ENCODE measurements at regions of chr7 and their contacts with region 1.

Region 1: DNA sequence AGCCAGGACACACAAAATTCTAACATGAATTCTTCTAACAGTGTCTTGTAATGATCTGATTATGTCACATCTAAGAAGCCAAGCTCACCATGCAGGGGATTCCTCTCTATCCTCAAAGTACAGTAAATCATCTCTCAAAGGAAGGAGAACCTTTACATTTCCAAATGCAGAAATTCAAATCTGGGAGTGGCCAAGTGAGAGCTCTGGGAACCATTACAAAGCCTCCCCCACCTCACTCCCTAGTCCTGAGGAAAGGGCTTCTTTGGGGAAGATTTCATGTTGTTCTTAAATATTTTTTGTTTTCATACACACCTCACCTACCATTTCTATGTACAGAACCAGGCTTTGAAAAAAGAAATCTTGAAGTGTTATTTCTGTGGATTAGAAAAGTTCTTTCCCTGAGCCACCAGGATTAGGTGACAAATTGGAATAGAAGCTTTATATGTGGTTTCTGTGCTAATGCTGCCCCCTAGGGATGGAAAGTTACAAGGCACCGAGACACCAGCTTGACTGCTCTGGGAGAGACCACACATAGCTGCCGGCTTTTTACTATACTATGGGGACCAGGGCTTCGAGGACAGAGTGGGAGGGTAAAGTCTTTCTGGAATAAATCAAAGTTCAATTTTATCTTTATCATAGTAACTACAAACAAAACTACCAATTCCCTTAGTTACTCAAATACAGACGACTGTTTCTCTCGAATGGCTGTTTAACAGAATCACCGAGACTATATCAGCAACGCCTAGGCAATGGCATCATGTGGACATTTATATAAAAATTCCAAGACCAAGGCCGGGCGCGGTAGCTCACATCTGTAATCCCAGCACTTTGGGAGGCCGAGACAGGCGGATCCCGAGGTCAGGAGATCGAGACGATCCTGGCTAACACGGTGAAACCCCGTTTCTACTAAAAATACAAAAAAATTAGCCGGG is 116.1 kb downstream of the RNF216 start:
- DNase-seq: peak; percentile 78
- H3K4me3 Mint-ChIP-seq: no peak overlapping the region
- H3K27ac Mint-ChIP-seq: no peak overlapping the region
- H3K4me1 Mint-ChIP-seq: peaks cover 19% of the 10 kb centered on the region
- H3K27me3 Mint-ChIP-seq: no peaks in the 10 kb centered on the region

Region 2: GRCh38 chr7:5494683-5495561 is 170.4 kb before region 1 on chr7:
- CTCF ChIA-PET with region 1: interaction called, 89 read pairs
- DNase-seq: peak; percentile 87
- H3K4me3 Mint-ChIP-seq: no peak overlapping the region
- H3K27ac Mint-ChIP-seq: peak overlapping the region; percentile 33
- H3K4me1 Mint-ChIP-seq: peaks cover 40% of the 10 kb centered on the region
- H3K27me3 Mint-ChIP-seq: no peaks in the 10 kb centered on the region

Region 3: DNA sequence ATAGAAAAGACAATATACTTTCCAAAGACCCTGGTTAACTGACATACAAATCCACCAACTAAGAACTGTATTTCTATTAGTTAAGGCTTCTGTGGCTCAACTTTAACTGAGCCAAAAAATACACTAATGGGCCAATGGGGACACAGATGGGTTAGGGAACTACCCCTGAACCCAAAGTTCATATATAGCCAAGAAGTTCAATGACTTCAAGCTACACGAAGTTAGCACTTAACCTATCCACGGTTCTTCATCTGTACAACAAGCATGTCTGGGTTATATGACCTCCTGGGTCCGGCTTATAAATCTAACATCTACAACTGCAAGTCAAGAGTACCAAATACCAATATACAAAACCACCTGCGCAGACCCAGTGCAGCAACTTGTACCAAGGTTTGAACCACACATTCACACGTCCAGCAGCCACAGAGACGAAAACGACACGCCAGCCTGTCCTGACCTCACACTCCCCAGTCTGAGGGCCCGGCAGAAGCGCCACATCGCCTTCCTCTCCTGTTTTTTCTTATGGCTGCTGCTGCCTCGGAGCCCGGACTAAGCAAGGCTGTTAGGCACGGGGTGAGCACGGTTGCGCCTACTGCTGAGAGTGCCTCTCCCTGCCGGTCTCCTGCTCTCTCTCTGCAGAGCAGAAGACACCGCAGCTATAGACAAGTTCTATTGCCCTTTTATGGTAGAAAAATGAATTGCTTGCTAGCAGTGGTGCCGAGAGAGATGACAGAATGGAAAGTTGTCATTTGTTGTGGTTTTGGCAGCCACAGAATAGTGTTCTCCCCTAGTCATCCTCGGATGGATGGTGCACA is 29.8 kb after region 1 on chr7:
- CTCF ChIA-PET with region 1: interaction called, 11 read pairs
- DNase-seq: peak; percentile 83
- H3K4me3 Mint-ChIP-seq: peak overlapping the region; percentile 82
- H3K27ac Mint-ChIP-seq: peak overlapping the region; percentile 95
- H3K4me1 Mint-ChIP-seq: peaks cover 99% of the 10 kb centered on the region
- H3K27me3 Mint-ChIP-seq: peaks cover 6% of the 10 kb centered on the region